Activated T-helper 1 cell treated with anti-CD3 and anti-CD28 coated beads, Interleukin-12 subunit alpha, Interleukin-12 subunit beta, Interleukin-2, Interleukin-4 antibody, amounts not matched to agents 30 ng/mL and 10 ng/mL and 1 ng/mL, durations not matched to agents 14 hours and 24 hours and 36 hours (primary cell): ENCODE measurements at regions of chr6 and their contacts with region 1.

Region 1: GRCh38 chr6:7238900-7239589 is 74.0 kb downstream of the SSR1 start:
- DNase-seq: peak; percentile 53
- H3K4me3 Mint-ChIP-seq: no peak overlapping the region
- H3K27ac Mint-ChIP-seq: no peak overlapping the region
- H3K4me1 Mint-ChIP-seq: peaks cover 9% of the 10 kb centered on the region
- H3K27me3 Mint-ChIP-seq: no peaks in the 10 kb centered on the region

Region 2: DNA sequence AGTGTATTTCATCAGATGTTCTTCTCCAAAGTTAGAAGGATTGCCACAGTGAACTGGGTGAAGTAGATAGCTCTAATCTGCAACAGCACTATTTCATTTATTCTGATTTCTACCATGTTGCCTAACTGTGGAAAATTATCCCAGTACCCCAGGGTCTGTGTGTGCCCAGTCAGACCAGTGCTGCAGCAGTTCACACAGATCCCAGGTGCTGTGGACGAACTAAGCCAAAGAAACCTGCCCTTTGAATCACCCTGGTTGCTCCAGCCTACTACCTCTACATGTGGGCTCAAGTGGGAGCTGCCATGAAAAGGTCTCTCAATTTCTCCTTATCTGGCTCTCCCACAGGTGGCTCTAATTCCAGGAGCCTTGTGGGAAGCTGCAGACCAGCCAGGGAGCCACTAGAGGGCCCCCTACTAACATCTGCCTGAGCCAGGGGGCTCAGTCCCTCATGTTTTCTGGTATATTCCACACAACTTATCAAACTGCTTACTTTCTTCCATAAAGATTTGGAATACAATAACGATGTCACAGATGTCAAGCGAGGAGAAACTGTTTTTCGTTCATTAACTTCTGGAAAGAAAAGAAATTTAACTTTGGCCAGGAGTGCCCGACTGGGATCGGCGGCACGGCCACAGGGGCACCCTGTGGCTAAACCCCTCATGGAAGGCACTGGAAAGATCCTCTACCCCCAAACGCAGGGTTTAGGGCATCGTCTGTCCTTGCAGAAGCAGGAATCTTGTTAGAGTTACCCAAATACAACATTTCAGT is 682.1 kb before region 1 on chr6:
- intact Hi-C with region 1: loop called (anchors 5 kb)
- DNase-seq: peak; percentile 15
- H3K4me3 Mint-ChIP-seq: no peak overlapping the region
- H3K27ac Mint-ChIP-seq: no peak overlapping the region
- H3K4me1 Mint-ChIP-seq: peaks cover 49% of the 10 kb centered on the region
- H3K27me3 Mint-ChIP-seq: peaks cover 16% of the 10 kb centered on the region

Region 3: GRCh38 chr6:6696867-6697531 is 542.0 kb before region 1 on chr6:
- intact Hi-C with region 1: loop called (anchors 2 kb)
- DNase-seq: peak; percentile 9
- H3K4me3 Mint-ChIP-seq: no peak overlapping the region
- H3K27ac Mint-ChIP-seq: no peak overlapping the region
- H3K4me1 Mint-ChIP-seq: peaks cover 31% of the 10 kb centered on the region
- H3K27me3 Mint-ChIP-seq: peaks cover 15% of the 10 kb centered on the region

Region 4: DNA sequence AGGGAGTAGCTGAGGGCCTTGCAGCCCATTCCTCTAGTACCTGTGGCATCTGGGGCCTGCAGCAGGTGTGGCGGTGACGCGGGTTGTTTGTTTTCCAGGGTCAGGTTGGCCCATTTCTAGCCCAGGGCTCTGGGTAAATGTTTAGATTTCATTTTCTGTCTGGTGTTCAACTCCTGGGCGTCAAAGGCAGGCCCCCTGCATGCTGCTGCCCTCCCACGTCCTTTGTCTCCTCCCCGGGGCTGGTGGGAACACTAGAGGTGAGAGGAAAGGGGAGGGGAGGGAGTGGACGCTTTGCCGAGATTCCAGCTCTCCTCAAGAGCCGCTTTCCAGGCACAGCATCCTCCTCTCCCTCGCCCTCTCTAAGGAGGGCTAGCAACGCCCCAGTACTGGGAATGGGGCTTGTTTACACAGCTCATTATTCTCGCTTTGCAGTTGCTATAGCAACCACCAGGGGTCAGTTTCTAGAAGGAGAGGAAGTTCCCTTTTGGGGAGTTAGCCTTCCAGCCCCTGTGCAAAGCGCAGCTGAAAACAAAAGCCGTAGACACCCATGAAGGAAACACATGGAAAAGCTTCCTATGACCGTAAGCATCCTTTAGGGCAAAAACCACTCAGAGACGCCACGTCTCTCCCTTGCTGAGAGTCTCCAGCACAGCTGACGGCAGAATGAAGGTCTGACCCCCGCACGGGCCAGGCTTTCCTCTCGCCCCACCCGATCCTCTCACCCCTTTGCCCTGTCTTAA is 480.0 kb before region 1 on chr6:
- intact Hi-C with region 1: loop called (anchors 1 kb)
- DNase-seq: no peak
- H3K4me3 Mint-ChIP-seq: no peak overlapping the region
- H3K27ac Mint-ChIP-seq: no peak overlapping the region
- H3K4me1 Mint-ChIP-seq: no peaks in the 10 kb centered on the region
- H3K27me3 Mint-ChIP-seq: peaks cover 12% of the 10 kb centered on the region

Region 5: DNA sequence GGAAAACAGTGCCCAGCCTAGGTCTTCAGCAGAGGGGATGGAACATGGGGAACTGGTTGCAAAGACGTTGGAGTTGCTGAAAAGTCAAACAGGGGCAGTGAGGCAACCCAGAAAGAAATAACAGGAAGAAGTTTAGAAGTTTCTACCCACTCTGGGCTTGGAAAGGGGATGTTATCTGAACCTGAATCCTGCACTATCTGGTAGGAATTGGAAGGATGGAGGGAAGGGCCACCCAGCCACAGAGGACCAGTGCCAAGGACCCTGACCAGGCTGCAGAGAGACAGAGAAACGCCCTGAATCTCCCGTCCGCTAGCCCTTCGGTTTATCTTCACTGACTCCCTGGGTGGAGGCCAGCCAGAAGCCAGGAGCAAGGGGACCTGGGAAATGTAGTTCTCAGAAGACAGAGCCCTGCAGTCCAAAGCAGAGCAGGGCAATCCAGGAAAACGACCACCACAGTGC is 348.6 kb before region 1 on chr6:
- intact Hi-C with region 1: no loop called
- DNase-seq: no peak
- H3K4me3 Mint-ChIP-seq: no peak overlapping the region
- H3K27ac Mint-ChIP-seq: no peak overlapping the region
- H3K4me1 Mint-ChIP-seq: no peaks in the 10 kb centered on the region
- H3K27me3 Mint-ChIP-seq: no peaks in the 10 kb centered on the region

Region 6: GRCh38 chr6:6972456-6972855 is 266.6 kb before region 1 on chr6:
- intact Hi-C with region 1: loop called (anchors 1 kb)
- DNase-seq: no peak
- H3K4me3 Mint-ChIP-seq: no peak overlapping the region
- H3K27ac Mint-ChIP-seq: no peak overlapping the region
- H3K4me1 Mint-ChIP-seq: no peaks in the 10 kb centered on the region
- H3K27me3 Mint-ChIP-seq: peaks cover 13% of the 10 kb centered on the region

Region 7: DNA sequence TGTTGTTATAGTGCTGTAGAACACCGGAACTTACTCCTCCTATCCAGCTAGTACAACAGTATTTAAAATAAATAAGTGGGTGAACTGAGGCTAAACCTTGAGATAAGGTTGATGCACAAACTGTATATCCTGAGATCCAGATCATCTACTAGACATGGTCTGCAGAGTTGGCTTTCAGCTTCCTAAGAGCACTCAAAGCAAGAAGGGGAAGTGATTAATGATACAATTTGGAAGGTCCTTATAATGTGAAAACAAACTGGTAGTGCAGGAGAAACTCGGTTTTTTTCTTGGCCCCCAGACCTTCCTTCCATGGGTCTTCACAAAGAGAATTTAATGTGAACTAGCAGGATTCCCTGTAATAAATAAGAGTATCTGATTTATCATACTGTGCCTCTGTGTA is 158.7 kb before region 1 on chr6:
- intact Hi-C with region 1: no loop called
- DNase-seq: no peak
- H3K4me3 Mint-ChIP-seq: no peak overlapping the region
- H3K27ac Mint-ChIP-seq: no peak overlapping the region
- H3K4me1 Mint-ChIP-seq: no peaks in the 10 kb centered on the region
- H3K27me3 Mint-ChIP-seq: peaks cover 81% of the 10 kb centered on the region

Region 8: GRCh38 chr6:7107578-7108195 is 131.4 kb before region 1 on chr6 and contains the start of gene RREB1:
- intact Hi-C with region 1: loop called (anchors 2 kb)
- DNase-seq: peak; percentile 34
- H3K4me3 Mint-ChIP-seq: peak within 1 kb of the TSS; percentile 96
- H3K27ac Mint-ChIP-seq: peak within 1 kb of the TSS; percentile 92
- H3K4me1 Mint-ChIP-seq: peaks cover 41% of the 10 kb centered on the region
- H3K27me3 Mint-ChIP-seq: peaks cover 21% of the 10 kb centered on the region
- total RNA-seq, gene RREB1: 12.3 and 12.7 TPM in 2 replicates